Activated T-helper 2 cell treated with anti-CD3 and anti-CD28 coated beads, Interferon-gamma antibody, Interleukin-2, Interleukin-4, amounts not matched to agents 10 μg/mL and 5 μg/mL and 100 μg/mL, durations not matched to agents 14 hours and 24 hours and 36 hours (primary cell): ENCODE measurements at regions of chr16 and their contacts with region 1.

Region 1: DNA sequence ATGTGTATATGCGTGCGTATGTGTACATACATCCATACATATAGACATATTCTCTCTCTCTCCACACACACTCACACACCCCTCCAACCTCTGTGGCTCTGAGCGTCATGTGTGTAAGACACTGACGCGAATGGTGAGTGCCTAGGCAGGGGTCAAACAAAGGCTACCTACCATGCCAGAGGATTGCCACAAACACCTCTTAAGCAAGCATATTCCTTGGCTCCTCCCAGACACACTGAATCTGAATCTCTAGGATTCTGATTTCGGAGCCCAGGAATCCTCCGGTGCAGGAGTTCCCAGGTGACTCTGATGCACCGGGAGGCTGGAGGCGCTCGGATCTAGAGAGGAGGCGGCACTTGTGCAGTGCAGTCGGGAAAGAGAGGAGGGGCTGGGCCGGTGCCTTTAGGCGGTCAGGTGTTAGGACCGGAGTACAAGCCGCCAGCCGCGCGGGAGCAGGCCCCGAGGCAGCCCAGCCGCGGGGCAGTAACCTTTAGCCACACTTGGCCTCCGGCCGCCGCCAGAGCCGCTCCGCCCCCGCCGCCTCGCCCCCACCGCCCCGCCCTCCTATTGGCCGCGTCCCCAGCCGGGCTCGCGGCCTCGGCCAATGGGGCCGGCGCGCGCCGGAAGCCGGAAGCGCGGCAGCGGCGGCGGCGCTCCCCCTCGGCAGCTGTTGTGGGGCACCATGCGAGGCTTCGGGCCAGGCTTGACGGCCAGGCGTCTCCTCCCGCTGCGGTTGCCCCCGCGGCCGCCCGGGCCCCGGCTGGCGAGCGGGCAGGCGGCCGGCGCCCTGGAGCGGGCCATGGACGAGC is at the start of gene MLYCD:
- DNase-seq: peak; percentile 71
- H3K4me3 Mint-ChIP-seq: peak within 1 kb of the TSS; percentile 97
- H3K27ac Mint-ChIP-seq: peak within 1 kb of the TSS; percentile 75
- H3K4me1 Mint-ChIP-seq: peaks cover 22% of the 10 kb centered on the region
- H3K27me3 Mint-ChIP-seq: peaks cover 13% of the 10 kb centered on the region
- total RNA-seq, gene MLYCD: 6.1 TPM in 2 replicates

Region 2: GRCh38 chr16:83674931-83675535 is 223.6 kb before region 1 on chr16:
- intact Hi-C with region 1: no loop called
- DNase-seq: no peak
- H3K4me3 Mint-ChIP-seq: no peak overlapping the region
- H3K27ac Mint-ChIP-seq: no peak overlapping the region
- H3K4me1 Mint-ChIP-seq: no peaks in the 10 kb centered on the region
- H3K27me3 Mint-ChIP-seq: no peaks in the 10 kb centered on the region

Region 3: DNA sequence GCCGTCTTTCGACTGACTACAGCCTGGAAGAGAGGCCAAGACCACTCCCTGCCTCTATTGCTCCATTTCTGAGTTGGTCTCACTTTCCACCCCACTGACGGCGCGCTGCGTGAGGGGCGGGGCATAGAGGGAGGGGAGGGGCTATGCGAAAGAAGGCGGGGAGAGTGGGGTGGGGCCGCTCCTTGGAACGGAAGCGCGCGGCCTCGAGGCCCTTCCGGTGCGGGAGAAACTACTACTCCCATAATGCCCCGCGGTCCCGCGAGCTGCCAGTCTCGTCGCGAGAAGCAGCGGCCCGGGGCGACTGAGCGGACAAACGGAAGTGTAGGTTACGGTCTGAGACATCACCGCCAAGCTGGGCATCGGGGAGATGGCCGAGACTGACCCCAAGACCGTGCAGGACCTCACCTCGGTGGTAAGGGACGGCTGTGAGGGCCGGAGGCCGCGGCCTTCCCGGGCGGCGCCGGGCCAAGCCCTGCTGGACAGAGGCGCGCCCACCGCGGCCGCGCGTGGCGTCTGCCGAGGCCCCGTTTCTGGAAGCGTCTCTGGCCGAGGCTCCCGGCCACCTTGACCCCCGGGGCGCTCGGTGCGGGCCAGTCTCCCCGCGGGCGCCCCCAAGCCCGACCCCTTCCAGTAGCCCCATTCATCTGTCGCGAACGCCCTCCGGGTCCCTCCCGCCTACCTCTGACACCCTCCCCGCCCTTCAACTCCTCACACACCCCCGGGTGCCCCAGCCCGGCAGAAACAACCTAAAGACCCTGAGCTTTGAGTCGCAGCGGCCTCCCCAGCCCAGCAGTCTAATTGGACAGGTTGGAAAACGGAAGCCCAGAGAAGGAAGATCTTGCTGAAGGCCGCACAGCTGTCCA is 90.7 kb before region 1 on chr16 and contains the start of gene HSBP1:
- intact Hi-C with region 1: loop called (anchors 1 kb)
- DNase-seq: peak; percentile 91
- H3K4me3 Mint-ChIP-seq: peak within 1 kb of the TSS; percentile 99
- H3K27ac Mint-ChIP-seq: peak within 1 kb of the TSS; percentile 94
- H3K4me1 Mint-ChIP-seq: peaks cover 26% of the 10 kb centered on the region
- H3K27me3 Mint-ChIP-seq: peaks cover 6% of the 10 kb centered on the region
- total RNA-seq, gene HSBP1: 109 and 117 TPM in 2 replicates

Region 4: GRCh38 chr16:83826146-83826913 is 72.3 kb before region 1 on chr16:
- intact Hi-C with region 1: loop called (anchors 5 kb)
- DNase-seq: peak; percentile 72
- H3K4me3 Mint-ChIP-seq: no peak overlapping the region
- H3K27ac Mint-ChIP-seq: no peak overlapping the region
- H3K4me1 Mint-ChIP-seq: peaks cover 6% of the 10 kb centered on the region
- H3K27me3 Mint-ChIP-seq: no peaks in the 10 kb centered on the region

Region 5: GRCh38 chr16:84186685-84187437 is 288.2 kb after region 1 on chr16 and contains the start of gene TAF1C:
- intact Hi-C with region 1: loop called (anchors 1 kb)
- DNase-seq: peak; percentile 83
- H3K4me3 Mint-ChIP-seq: peak within 1 kb of the TSS; percentile 93
- H3K27ac Mint-ChIP-seq: peak within 1 kb of the TSS; percentile 84
- H3K4me1 Mint-ChIP-seq: peaks cover 11% of the 10 kb centered on the region
- H3K27me3 Mint-ChIP-seq: no peaks in the 10 kb centered on the region
- total RNA-seq, gene TAF1C: 57.5 and 64.4 TPM in 2 replicates